ENCODE measurements at regions of chr13 and their contacts with region 1.

Region 1: DNA sequence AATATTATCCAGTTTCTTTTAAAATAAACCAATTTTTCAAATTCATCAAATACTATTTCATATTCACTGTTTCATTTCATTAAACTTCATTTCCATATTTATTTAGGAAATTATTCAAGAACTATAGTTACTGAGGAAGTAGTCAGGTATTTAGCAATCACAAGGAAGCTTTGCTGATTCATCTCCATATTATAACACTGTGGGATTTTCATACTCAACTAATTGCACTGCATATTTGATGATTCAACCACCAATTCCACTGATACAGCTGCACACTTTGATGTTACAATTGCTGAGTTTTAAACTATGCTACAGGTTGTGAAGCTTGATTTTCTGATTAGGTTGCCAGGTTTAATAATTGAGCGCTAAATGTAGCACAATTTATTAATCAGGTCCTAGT is 556.8 kb upstream of the SLITRK1 start:
- DNase-seq: no peak
- ATAC-seq: no peak
- H3K4me3 ChIP-seq: no peak overlapping the region
- H3K4me3 Mint-ChIP-seq: no peak overlapping the region
- H3K27ac ChIP-seq: no peak overlapping the region
- H3K27ac Mint-ChIP-seq: no peak overlapping the region
- H3K4me1 ChIP-seq: no peaks in the 10 kb centered on the region
- H3K4me1 Mint-ChIP-seq: no peaks in the 10 kb centered on the region
- H3K27me3 ChIP-seq: no peaks in the 10 kb centered on the region
- H3K27me3 Mint-ChIP-seq: no peaks in the 10 kb centered on the region
- CTCF ChIP-seq: no peak

Region 2: DNA sequence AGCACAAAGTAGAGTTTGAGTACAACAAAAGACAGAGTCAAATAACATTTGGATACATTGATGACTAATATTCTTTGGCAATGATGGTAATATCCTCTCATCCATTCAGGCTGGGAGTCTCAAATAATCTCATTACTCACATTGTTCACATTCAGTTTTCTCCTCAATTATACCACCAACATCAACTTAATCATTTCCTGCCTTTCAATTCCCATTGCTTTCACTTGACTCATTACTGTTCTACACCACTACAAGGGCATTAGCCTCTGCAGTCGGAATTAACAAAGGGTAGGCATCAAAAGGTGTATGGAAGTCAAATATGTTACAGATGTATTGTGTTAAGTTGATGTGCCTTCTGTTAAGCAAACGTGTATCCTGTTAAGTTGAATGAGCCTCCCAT is 38.4 kb before region 1 on chr13:
- intact Hi-C with region 1: loop called (anchors 1 kb)
- DNase-seq: no peak
- ATAC-seq: no peak
- H3K4me3 ChIP-seq: no peak overlapping the region
- H3K4me3 Mint-ChIP-seq: no peak overlapping the region
- H3K27ac ChIP-seq: no peak overlapping the region
- H3K27ac Mint-ChIP-seq: no peak overlapping the region
- H3K4me1 ChIP-seq: no peaks in the 10 kb centered on the region
- H3K4me1 Mint-ChIP-seq: no peaks in the 10 kb centered on the region
- H3K27me3 ChIP-seq: no peaks in the 10 kb centered on the region
- H3K27me3 Mint-ChIP-seq: no peaks in the 10 kb centered on the region
- CTCF ChIP-seq: no peak

Region 3: GRCh38 chr13:85985791-85986190 is 1546.7 kb after region 1 on chr13:
- intact Hi-C with region 1: no loop called
- DNase-seq: no peak
- ATAC-seq: no peak
- H3K4me3 ChIP-seq: no peak overlapping the region
- H3K4me3 Mint-ChIP-seq: no peak overlapping the region
- H3K27ac ChIP-seq: no peak overlapping the region
- H3K27ac Mint-ChIP-seq: no peak overlapping the region
- H3K4me1 ChIP-seq: no peaks in the 10 kb centered on the region
- H3K4me1 Mint-ChIP-seq: no peaks in the 10 kb centered on the region
- H3K27me3 ChIP-seq: no peaks in the 10 kb centered on the region
- H3K27me3 Mint-ChIP-seq: no peaks in the 10 kb centered on the region
- CTCF ChIP-seq: no peak

Measured in natural killer cell (primary cell).